H1 (cell line): ENCODE measurements at regions of chr12 and their contacts with region 1.

Region 1: DNA sequence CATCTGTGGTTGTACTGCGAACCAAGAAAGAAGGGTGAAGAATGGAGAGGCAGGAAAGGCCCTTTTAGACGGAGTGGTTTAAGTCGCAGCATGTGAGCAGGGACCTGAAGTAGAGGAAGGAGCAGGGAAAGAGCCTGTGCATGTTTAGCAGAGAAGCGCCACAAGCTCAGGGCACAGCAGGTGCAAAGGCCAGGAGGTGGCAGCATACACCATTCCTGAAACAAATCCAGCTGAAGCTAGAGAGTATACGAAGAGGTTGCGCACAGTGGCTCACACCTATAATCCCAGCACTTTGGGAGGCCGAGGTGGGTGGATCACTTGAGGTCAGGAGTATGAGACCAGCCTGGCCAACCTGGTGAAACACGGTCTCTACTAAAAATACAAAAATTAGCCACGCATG is 49.9 kb downstream of the HELB start:
- DNase-seq: peak; percentile 71 to 77
- H3K4me3 ChIP-seq: no peak overlapping the region
- H3K27ac ChIP-seq: no peak overlapping the region
- H3K4me1 ChIP-seq: peaks cover 0 to 3% (median under 1%) of the 10 kb centered on the region in 4 experiments; a peak in 3 of 7 replicates
- H3K27me3 ChIP-seq: no peaks in the 10 kb centered on the region
- CTCF ChIP-seq: peak; percentile 67 to 80 (median 79)
- EP300 ChIP-seq: no peak
- POLR2A ChIP-seq: no peak
- RAD21 ChIP-seq: peak; percentile 83 to 86

Region 2: DNA sequence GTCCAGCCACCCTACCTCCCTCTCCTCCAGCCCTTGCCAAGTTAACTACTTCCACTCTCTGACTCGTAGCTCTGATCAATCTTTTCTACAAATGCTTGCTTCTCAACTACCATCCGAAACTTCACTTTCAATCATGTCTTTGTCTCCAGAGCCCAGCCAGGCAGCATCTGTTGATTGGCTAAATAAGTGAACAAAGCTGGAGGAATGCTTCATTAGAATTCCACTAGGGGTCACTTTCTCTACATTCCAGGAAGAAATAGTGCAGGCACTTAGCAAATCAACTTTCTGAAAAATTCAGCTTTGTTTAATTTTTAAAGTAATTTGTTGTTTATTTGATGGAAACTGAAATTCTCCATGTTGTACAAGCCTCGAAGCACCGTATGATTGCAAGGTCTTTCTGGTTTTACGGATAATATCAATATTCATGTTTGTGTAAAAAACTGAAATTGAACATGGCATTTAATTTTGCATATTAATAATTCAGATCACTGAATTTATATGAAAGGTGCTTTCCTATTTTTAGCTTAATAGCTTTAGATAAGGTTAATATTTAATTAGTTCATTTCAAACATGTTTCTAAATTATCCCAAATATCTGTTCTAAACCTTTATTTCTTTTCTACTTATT is 82.3 kb before region 1 on chr12:
- CTCF ChIA-PET with region 1: interaction called, 22 read pairs
- POLR2A ChIA-PET with region 1: no interaction called
- DNase-seq: no peak
- H3K4me3 ChIP-seq: no peak overlapping the region
- H3K27ac ChIP-seq: no peak overlapping the region
- H3K4me1 ChIP-seq: peaks cover 0 to 4% (median 1%) of the 10 kb centered on the region in 4 experiments; a peak in 2 of 7 replicates
- H3K27me3 ChIP-seq: no peaks in the 10 kb centered on the region
- CTCF ChIP-seq: peak in 2 of 3 experiments; percentile 41 to 62; a peak in 2 of 4 replicates
- EP300 ChIP-seq: no peak
- POLR2A ChIP-seq: no peak
- RAD21 ChIP-seq: peak; percentile 47 to 58; a peak in 3 of 4 replicates

Region 3: DNA sequence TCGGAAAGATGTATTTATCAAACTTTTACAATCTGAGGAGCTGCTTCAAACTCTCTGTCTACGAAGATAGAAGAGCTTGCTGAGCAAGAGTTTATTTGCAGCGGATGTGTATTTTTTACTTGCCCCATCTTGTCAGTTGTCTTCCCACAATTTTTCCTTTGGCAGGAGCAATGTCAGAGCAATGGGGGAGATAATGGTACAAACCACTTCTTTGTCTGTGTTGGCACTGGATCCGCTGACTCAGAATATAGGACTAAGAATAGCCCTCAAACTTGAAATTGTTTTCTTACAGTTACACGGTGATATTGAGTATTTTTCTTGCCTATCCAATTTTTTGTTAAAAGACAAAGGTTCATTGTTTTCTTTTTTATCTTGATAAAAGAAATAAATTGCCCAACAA is 22.3 kb before region 1 on chr12:
- CTCF ChIA-PET with region 1: no interaction called
- POLR2A ChIA-PET with region 1: no interaction called
- DNase-seq: no peak
- H3K4me3 ChIP-seq: no peak overlapping the region
- H3K27ac ChIP-seq: no peak overlapping the region
- H3K4me1 ChIP-seq: no peaks in the 10 kb centered on the region
- H3K27me3 ChIP-seq: no peaks in the 10 kb centered on the region
- CTCF ChIP-seq: no peak
- EP300 ChIP-seq: no peak
- POLR2A ChIP-seq: no peak
- RAD21 ChIP-seq: no peak

Region 4: GRCh38 chr12:66365718-66366490 is 13.7 kb after region 1 on chr12:
- CTCF ChIA-PET with region 1: interaction called, 25 read pairs
- POLR2A ChIA-PET with region 1: no interaction called
- DNase-seq: no peak
- H3K4me3 ChIP-seq: no peak overlapping the region
- H3K27ac ChIP-seq: no peak overlapping the region
- H3K4me1 ChIP-seq: no peaks in the 10 kb centered on the region
- H3K27me3 ChIP-seq: no peaks in the 10 kb centered on the region
- CTCF ChIP-seq: no peak
- EP300 ChIP-seq: no peak
- POLR2A ChIP-seq: no peak
- RAD21 ChIP-seq: no peak

Region 5: GRCh38 chr12:66375560-66375959 is 23.4 kb after region 1 on chr12:
- CTCF ChIA-PET with region 1: interaction called, 15 read pairs
- POLR2A ChIA-PET with region 1: no interaction called
- DNase-seq: no peak
- H3K4me3 ChIP-seq: no peak overlapping the region
- H3K27ac ChIP-seq: no peak overlapping the region
- H3K4me1 ChIP-seq: no peaks in the 10 kb centered on the region
- H3K27me3 ChIP-seq: no peaks in the 10 kb centered on the region
- CTCF ChIP-seq: no peak
- EP300 ChIP-seq: no peak
- POLR2A ChIP-seq: no peak
- RAD21 ChIP-seq: no peak

Region 6: DNA sequence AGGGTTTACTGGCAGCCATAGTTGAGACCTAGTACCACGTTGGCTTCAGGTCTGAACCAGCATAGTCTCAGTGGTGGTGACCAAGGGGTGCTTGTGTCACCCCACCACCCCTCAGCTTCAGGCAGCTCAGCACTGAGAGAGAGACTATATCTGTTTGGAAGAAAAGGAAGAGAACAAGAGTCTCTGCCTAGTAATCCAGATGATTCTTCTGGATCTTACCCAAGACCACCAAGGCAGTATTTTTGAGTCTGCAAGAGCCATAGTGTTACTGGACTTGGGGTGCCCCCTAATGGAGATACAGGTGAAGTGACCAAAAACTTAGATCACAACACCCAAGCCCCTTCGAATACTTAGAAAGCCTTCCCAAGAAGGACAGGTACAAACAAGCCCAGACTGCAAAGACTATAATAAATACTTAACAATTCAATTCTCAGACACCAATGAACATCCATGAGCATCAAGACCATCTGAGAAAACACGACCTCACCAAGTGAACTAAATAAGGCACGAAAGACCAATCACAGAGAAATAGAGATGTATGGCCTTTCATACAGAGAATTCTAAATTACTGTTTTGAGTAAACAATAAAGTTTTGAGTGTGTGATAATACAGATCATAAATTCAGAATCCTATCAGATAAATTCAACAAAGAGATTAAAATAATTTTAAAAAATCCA is 57.1 kb after region 1 on chr12:
- CTCF ChIA-PET with region 1: interaction called, 24 read pairs
- POLR2A ChIA-PET with region 1: no interaction called
- DNase-seq: peak; percentile 33 to 58
- H3K4me3 ChIP-seq: no peak overlapping the region
- H3K27ac ChIP-seq: no peak overlapping the region
- H3K4me1 ChIP-seq: peaks cover 0 to 6% (median 3%) of the 10 kb centered on the region in 4 experiments; a peak in 1 of 7 replicates
- H3K27me3 ChIP-seq: no peaks in the 10 kb centered on the region
- CTCF ChIP-seq: peak in 2 of 3 experiments; percentile 63 to 72; a peak in 3 of 4 replicates
- EP300 ChIP-seq: no peak
- POLR2A ChIP-seq: no peak
- RAD21 ChIP-seq: peak; percentile 89 to 92

Region 7: DNA sequence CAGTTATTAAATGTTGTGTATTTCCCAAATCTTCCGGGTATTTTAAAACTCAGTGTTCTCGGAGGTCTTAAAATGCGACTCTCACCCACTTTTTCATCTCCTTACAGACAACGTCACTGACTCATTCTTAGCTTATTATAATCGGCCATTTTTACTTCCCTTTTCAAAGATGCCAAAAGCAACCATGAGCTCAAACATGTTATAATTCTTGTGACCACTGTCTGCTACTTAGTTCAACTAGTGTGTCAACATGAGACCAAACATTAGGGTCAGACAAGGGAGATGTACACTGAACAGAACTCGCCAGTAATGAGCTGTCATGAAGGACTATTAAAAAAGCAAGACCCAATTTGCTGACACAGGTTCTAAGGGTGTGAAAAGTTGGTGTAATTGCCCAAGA is 330.9 kb after region 1 on chr12:
- CTCF ChIA-PET with region 1: interaction called, 10 read pairs
- POLR2A ChIA-PET with region 1: no interaction called
- DNase-seq: no peak
- H3K4me3 ChIP-seq: no peak overlapping the region
- H3K27ac ChIP-seq: no peak overlapping the region
- H3K4me1 ChIP-seq: peaks cover 3 to 13% (median 8%) of the 10 kb centered on the region in 4 experiments; a peak in 4 of 7 replicates
- H3K27me3 ChIP-seq: no peaks in the 10 kb centered on the region
- CTCF ChIP-seq: no peak
- EP300 ChIP-seq: no peak
- POLR2A ChIP-seq: no peak
- RAD21 ChIP-seq: no peak

Region 8: GRCh38 chr12:66693901-66694675 is 341.9 kb after region 1 on chr12:
- CTCF ChIA-PET with region 1: interaction called, 17 read pairs
- POLR2A ChIA-PET with region 1: no interaction called
- DNase-seq: no peak
- H3K4me3 ChIP-seq: no peak overlapping the region
- H3K27ac ChIP-seq: no peak overlapping the region
- H3K4me1 ChIP-seq: no peaks in the 10 kb centered on the region
- H3K27me3 ChIP-seq: no peaks in the 10 kb centered on the region; a peak in 1 of 7 replicates
- CTCF ChIP-seq: peak in 2 of 3 experiments; percentile 32 to 62; a peak in 2 of 4 replicates
- EP300 ChIP-seq: no peak
- POLR2A ChIP-seq: no peak
- RAD21 ChIP-seq: peak; percentile 63 to 73